Right lobe of liver (tissue), 6 donors: ENCODE measurements at regions of chr20 and their contacts with region 1.

Region 1: DNA sequence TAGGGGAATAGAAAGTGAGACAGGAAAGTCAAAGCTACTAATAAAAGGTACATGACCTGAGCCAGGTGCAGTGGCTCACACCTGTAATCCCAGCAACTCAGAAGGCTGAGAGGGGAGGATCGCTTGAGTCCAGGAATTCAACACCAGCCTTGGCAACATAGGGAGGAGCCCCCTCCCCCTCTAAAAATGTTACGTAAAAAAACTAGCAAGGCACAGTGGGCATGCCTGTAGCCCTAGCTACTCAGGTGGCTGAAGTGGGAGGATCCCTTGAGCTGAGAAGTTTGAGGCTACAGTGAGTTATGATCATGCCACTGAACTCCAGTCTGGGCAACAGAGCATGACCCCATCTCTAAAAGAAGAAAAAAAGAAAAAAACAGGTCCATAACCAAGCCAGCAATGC is 186.1 kb upstream of the RIN2 start:
- DNase-seq: no peak
- ATAC-seq: no peak
- H3K4me3 ChIP-seq: no peak overlapping the region
- H3K27ac ChIP-seq: no peak overlapping the region
- H3K4me1 ChIP-seq: no peaks in the 10 kb centered on the region
- H3K27me3 ChIP-seq: no peaks in the 10 kb centered on the region
- CTCF ChIP-seq: no peak
- POLR2A ChIP-seq: no peak

Region 2: DNA sequence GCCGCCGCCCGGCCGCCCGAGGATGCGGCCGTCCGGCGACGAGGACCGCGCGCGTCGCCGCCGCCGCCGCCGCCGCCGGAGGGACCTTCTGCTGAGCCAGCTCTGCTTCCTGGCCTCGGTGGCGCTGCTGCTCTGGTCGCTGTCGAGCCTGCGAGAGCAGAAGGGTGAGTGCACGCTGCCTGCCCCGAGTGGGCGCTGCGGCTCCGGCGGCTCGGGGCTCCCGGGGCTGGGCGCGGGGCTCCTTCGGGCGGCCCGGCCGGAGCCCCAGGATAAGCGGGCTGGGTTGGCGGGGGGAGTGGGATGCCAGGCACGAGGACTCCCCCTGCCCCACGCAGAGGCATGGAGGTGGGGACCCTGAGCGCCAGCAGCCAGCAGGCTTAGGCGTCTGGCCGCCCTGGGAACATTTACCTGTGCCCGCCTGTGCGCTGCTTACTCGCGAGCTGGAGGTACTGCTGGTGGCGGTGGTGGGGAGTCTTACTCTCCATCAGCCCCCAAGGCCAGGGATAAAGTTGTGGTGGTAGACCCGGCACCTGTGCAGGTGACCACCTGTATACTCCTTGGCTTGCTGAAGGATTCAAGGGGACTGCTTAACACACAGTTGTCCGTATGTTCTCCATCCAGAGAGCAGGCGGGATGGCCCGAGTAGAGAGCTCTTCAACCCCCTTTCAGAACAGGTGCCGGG is 359.0 kb before region 1 on chr20:
- intact Hi-C with region 1: loop called in 1 of 2 experiments (anchors 10 kb)
- DNase-seq: peak; percentile 60 to 69 (median 63)
- ATAC-seq: peak; percentile 56 to 80 (median 68)
- H3K4me3 ChIP-seq: peak overlapping the region in 2 of 3 donors; percentile 10 to 14
- H3K27ac ChIP-seq: no peak overlapping the region
- H3K4me1 ChIP-seq: no peaks in the 10 kb centered on the region
- H3K27me3 ChIP-seq: peaks cover 0 to 8% of the 10 kb centered on the region in 2 donors
- CTCF ChIP-seq: peak in 3 of 4 donors; percentile 8 to 35 (median 14)
- POLR2A ChIP-seq: no peak